GM12878 (cell line): ENCODE measurements at regions of chr4 and their contacts with region 1.

Region 1: DNA sequence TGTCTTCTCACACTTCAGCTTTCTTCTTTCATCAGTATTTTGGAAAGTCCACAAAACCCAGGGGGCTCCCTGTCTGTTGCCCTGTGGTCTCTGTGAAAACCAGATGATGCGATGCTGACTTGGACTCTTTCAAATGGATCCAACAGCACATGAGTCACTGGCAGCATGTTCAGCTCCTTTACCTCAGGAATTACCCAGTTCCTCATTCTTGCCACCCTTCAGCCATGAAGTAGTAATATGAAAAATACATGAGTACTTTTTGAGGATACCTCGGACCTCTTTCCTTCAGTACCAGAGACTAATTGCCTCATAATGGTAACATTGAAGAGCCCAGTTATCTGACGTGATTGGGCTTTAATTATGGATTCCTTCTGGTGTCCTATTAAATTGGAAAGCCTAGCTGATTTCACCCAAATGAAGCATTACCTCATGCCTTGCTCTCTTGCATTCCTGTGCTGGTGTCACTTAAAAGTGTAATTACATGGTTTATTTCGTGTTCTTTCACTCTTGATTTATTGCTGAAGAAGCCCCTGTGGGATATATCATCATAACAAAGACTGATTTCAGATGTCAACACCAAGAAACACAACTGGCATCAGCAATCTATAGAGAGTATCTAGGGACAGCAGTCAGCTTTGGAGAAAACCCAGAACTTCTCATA is 63.4 kb downstream of the NFKB1 start:
- DNase-seq: peak; percentile 91
- ATAC-seq: peak; percentile 87
- H3K4me3 ChIP-seq: no peak overlapping the region; the same call in 1 of the 2 replicates
- H3K27ac ChIP-seq: peak overlapping the region; percentile 65
- H3K4me1 ChIP-seq: peaks cover 45% of the 10 kb centered on the region
- H3K27me3 ChIP-seq: no peaks in the 10 kb centered on the region
- CTCF ChIP-seq: no peak
- EP300 ChIP-seq: peak; percentile 84 to 94; a peak in 3 of 4 replicates
- POLR2A ChIP-seq: no peak
- RAD21 ChIP-seq: peak; percentile 13; the same call in 1 of the 2 replicates

Region 2: GRCh38 chr4:102466298-102466697 is 98.2 kb before region 1 on chr4:
- CTCF ChIA-PET with region 1: no interaction called
- POLR2A ChIA-PET with region 1: no interaction called
- RAD21 ChIA-PET with region 1: no interaction called
- SMC1A ChIA-PET with region 1: no interaction called
- in situ Hi-C with region 1: no loop called
- intact Hi-C with region 1: no loop called
- DNase-seq: no peak
- ATAC-seq: peak; percentile 42; the same call in 2 of the 3 replicates
- H3K4me3 ChIP-seq: no peak overlapping the region
- H3K27ac ChIP-seq: no peak overlapping the region
- H3K4me1 ChIP-seq: no peaks in the 10 kb centered on the region
- H3K27me3 ChIP-seq: no peaks in the 10 kb centered on the region
- CTCF ChIP-seq: no peak
- EP300 ChIP-seq: no peak
- POLR2A ChIP-seq: no peak
- RAD21 ChIP-seq: no peak

Region 3: DNA sequence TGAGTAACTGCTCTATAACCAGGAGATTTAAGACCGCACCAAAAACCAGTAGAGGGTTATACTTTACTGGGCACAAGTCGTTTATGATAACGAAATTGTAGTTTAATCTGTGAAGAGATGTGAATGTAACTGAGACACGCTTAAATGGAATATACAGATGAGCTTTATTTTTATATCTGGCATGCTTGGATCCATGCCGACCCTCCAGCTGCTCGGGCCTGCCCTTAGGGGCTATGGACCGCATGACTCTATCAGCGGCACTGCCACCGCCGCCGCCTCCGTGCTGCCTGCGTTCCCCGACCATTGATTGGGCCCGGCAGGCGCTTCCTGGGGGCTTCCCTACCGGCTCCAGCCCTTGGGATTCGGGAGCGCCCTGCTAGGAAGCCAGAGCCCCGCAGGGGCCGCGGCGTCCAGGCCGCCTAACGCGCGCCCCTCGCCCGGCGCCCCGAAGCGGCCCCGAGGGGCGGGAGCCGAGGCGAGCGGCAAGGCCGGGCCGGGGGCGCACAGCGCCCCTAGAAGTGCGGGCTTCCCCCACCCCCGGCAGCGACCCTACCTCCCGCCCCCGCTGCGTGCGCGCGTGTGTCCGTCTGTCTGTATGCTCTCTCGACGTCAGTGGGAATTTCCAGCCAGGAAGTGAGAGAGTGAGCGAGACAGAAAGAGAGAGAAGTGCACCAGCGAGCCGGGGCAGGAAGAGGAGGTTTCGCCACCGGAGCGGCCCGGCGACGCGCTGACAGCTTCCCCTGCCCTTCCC is 63.7 kb before region 1 on chr4 and contains the start of gene NFKB1:
- CTCF ChIA-PET with region 1: interaction called, 4 read pairs
- POLR2A ChIA-PET with region 1: interaction called, 3 read pairs
- RAD21 ChIA-PET with region 1: interaction called, 7 read pairs
- SMC1A ChIA-PET with region 1: interaction called, 5 read pairs
- in situ Hi-C with region 1: no loop called
- intact Hi-C with region 1: loop called (anchors 1 kb)
- DNase-seq: peak; percentile 55
- ATAC-seq: peak; percentile 48
- H3K4me3 ChIP-seq: peak within 1 kb of the TSS; percentile 75
- H3K27ac ChIP-seq: peak within 1 kb of the TSS; percentile 97
- H3K4me1 ChIP-seq: peaks cover 3% of the 10 kb centered on the region; the same call in 1 of the 2 replicates
- H3K27me3 ChIP-seq: no peaks in the 10 kb centered on the region
- CTCF ChIP-seq: no peak
- EP300 ChIP-seq: peak in 1 of 2 experiments; percentile 65; a peak in 1 of 4 replicates
- POLR2A ChIP-seq: peak; percentile 83; the same call in 1 of the 2 replicates
- RAD21 ChIP-seq: no peak
- polyA plus RNA-seq, gene NFKB1: 20.8 to 32.7 TPM

Region 4: DNA sequence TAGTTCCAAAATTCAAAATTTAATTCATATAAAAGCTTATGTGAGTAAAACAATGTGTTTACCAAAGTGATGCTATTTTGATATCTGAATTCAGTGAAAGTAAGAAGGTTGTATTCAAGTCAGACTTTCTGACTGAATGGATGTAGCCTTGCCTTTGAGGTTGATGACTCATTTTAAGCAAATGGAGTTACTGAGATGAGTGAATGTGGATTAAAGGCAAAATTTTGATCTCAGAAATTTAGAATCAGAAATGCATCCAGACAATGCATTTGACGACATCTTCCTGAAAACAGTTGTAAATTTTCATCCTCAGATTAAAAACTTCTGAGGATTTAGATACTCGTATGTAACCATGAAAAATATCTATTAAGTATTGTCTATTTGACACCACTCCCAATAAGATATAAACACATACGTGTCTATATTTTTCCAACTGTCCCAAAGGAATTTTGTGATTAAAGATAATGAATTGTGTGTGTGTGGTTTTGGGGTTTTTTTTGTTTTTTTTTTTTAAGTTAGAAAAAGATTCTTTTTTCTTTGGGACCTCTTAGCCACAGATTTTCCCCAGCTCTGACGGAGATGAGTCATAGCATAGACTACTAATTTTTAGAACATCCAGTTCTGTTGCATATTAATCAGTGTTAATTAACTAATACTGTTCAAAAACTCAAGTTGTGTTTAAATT is 29.0 kb before region 1 on chr4:
- CTCF ChIA-PET with region 1: no interaction called
- POLR2A ChIA-PET with region 1: interaction called, 5 read pairs
- RAD21 ChIA-PET with region 1: interaction called, 4 read pairs
- SMC1A ChIA-PET with region 1: interaction called, 12 read pairs
- in situ Hi-C with region 1: no loop called
- intact Hi-C with region 1: no loop called
- DNase-seq: no peak
- ATAC-seq: peak; percentile 78
- H3K4me3 ChIP-seq: no peak overlapping the region
- H3K27ac ChIP-seq: peak overlapping the region; percentile 29; the same call in 1 of the 2 replicates
- H3K4me1 ChIP-seq: peaks cover 17% of the 10 kb centered on the region
- H3K27me3 ChIP-seq: no peaks in the 10 kb centered on the region
- CTCF ChIP-seq: no peak
- EP300 ChIP-seq: peak in 1 of 2 experiments; percentile 77; a peak in 2 of 4 replicates
- POLR2A ChIP-seq: no peak
- RAD21 ChIP-seq: no peak

Region 5: GRCh38 chr4:102554482-102554881 is 10.0 kb before region 1 on chr4:
- CTCF ChIA-PET with region 1: interaction called, 3 read pairs
- POLR2A ChIA-PET with region 1: interaction called, 52 read pairs
- RAD21 ChIA-PET with region 1: interaction called, 4 read pairs
- SMC1A ChIA-PET with region 1: interaction called, 12 read pairs
- in situ Hi-C with region 1: no loop called
- intact Hi-C with region 1: no loop called
- DNase-seq: no peak
- ATAC-seq: no peak
- H3K4me3 ChIP-seq: no peak overlapping the region
- H3K27ac ChIP-seq: no peak overlapping the region
- H3K4me1 ChIP-seq: peaks cover 18% of the 10 kb centered on the region
- H3K27me3 ChIP-seq: no peaks in the 10 kb centered on the region
- CTCF ChIP-seq: no peak
- EP300 ChIP-seq: no peak
- POLR2A ChIP-seq: no peak
- RAD21 ChIP-seq: no peak

Region 6: GRCh38 chr4:102578819-102579218 is 14.3 kb after region 1 on chr4:
- CTCF ChIA-PET with region 1: interaction called, 12 read pairs
- POLR2A ChIA-PET with region 1: interaction called, 16 read pairs
- RAD21 ChIA-PET with region 1: interaction called, 18 read pairs
- SMC1A ChIA-PET with region 1: interaction called, 37 read pairs
- in situ Hi-C with region 1: no loop called
- intact Hi-C with region 1: no loop called
- DNase-seq: no peak
- ATAC-seq: no peak; the same call in 2 of the 3 replicates
- H3K4me3 ChIP-seq: no peak overlapping the region
- H3K27ac ChIP-seq: no peak overlapping the region
- H3K4me1 ChIP-seq: peaks cover 5% of the 10 kb centered on the region
- H3K27me3 ChIP-seq: no peaks in the 10 kb centered on the region
- CTCF ChIP-seq: no peak; a peak in 1 of 6 replicates
- EP300 ChIP-seq: no peak
- POLR2A ChIP-seq: no peak
- RAD21 ChIP-seq: no peak

Region 7: DNA sequence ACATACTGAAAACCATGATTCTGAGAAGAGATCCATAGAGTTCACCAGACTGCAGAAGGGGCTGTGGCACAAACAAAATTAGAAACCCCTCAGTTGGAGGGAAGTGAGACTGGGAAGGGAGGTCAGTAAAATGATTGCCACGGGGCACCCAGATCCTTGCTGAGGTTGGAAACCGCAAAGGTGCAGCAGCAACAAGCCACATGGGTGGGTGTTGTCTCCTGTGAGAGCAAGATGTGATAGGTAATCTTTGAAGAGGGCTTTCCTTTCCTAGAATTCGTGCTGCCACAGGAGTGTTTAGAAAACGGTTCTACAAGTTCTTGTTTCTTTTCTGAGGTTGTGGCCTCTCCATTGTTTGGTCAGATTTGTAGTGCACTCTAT is 22.1 kb after region 1 on chr4:
- CTCF ChIA-PET with region 1: interaction called, 12 read pairs
- POLR2A ChIA-PET with region 1: interaction called, 10 read pairs
- RAD21 ChIA-PET with region 1: interaction called, 4 read pairs
- SMC1A ChIA-PET with region 1: interaction called, 37 read pairs
- in situ Hi-C with region 1: no loop called
- intact Hi-C with region 1: loop called (anchors 2 kb)
- DNase-seq: peak; percentile 36
- ATAC-seq: peak; percentile 63
- H3K4me3 ChIP-seq: no peak overlapping the region
- H3K27ac ChIP-seq: peak overlapping the region; percentile 77
- H3K4me1 ChIP-seq: peaks cover 26% of the 10 kb centered on the region
- H3K27me3 ChIP-seq: no peaks in the 10 kb centered on the region
- CTCF ChIP-seq: no peak
- EP300 ChIP-seq: no peak
- POLR2A ChIP-seq: no peak
- RAD21 ChIP-seq: no peak